ENCODE measurements at regions of chr5 and their contacts with region 1.

Region 1: DNA sequence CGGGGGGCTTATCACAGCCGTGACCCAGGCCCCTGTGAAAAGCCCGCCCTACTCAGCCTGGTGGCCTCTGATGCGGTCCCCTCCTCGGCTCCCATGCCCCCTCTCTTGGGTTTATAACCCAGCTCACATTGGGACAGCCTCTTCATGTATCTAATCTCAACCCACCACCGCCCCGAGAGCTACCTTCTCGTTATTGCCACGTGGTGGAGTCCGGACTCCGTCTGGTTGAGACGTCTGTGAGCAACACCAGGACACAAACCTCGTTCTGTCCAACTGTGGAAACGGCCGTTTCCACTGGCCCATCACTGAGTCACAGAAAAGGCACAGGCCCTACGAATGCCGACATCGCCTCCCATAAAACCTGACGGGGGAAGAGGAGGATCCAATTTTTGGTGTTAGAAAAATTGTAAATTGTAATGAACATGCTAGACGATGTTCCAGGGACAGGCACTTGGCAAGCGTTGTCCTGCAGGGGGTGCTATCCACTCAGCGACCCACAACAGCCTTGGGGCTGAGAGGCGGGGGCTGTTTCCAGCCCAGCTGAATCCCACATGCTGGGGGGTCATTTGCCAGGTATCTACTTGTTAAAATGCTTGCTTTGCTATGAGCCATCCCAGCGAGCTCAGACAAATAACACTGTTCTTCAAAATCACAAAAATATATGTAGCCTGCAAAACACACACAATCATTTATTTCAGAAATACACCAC is 37.3 kb upstream of the N4BP3 start:
- H3K4me3 ChIP-seq: peak overlapping the region; percentile 24
- H3K27ac ChIP-seq: no peak overlapping the region
- H3K4me1 ChIP-seq: no peaks in the 10 kb centered on the region
- CTCF ChIP-seq: peak; percentile 87

Region 2: GRCh38 chr5:178090858-178091540 is 15.0 kb after region 1 on chr5:
- CTCF ChIA-PET with region 1: interaction called, 31 read pairs
- POLR2A ChIA-PET with region 1: no interaction called
- H3K4me3 ChIP-seq: no peak overlapping the region
- H3K27ac ChIP-seq: no peak overlapping the region
- H3K4me1 ChIP-seq: no peaks in the 10 kb centered on the region
- CTCF ChIP-seq: no peak

Region 3: DNA sequence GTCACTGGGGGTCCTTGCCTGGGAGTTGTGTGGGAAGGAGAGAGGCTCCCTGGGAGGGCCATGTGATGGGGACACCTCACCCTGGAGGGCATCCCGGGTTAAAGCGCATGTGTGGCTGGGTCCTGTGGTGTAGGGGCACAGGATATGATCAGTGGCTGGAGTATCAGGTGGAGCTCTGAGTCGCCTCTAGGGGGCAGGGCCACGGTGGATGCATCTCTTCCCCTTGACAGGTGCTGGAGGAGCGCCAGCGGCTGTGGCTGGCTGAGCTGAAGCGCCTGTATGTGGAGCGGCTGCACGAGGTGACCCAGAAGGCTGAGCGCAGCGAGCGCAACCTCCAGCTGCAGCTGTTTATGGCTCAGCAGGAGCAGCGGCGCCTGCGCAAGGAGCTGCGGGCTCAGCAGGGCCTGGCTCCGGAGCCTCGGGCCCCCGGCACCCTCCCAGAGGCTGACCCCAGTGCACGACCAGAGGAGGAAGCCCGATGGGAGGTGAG is 44.9 kb after region 1 on chr5:
- CTCF ChIA-PET with region 1: interaction called, 19 read pairs
- POLR2A ChIA-PET with region 1: interaction called, 3 read pairs
- H3K4me3 ChIP-seq: no peak overlapping the region
- H3K27ac ChIP-seq: no peak overlapping the region; the same call in 1 of the 2 replicates
- H3K4me1 ChIP-seq: 0 out of 2 replicates have a peak, but pooled peaks cover 2% of the 10 kb centered on the region
- CTCF ChIP-seq: peak; percentile 96

Region 4: DNA sequence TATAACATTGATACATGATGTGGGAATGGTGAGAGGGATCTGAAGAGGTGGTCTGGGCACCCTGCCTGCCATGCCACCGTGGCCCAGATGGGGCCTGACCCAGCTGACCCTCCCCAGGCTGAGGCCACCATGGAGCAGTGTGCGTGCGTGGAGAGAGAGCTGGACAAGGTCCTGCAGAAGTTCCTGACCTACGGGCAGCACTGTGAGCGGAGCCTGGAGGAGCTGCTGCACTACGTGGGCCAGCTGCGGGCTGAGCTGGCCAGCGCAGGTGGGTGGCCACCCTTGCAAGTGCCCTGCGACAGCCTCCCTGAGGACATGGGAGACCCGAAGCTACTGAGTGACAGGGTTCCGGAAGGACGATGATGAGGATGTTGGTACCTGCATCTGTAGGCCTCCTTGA is 62.0 kb after region 1 on chr5:
- CTCF ChIA-PET with region 1: interaction called, 204 read pairs
- POLR2A ChIA-PET with region 1: interaction called, 3 read pairs
- H3K4me3 ChIP-seq: no peak overlapping the region
- H3K27ac ChIP-seq: no peak overlapping the region
- H3K4me1 ChIP-seq: no peaks in the 10 kb centered on the region
- CTCF ChIP-seq: no peak

Region 5: GRCh38 chr5:178163772-178164735 is 88.1 kb after region 1 on chr5:
- CTCF ChIA-PET with region 1: interaction called, 39 read pairs
- POLR2A ChIA-PET with region 1: no interaction called
- H3K4me3 ChIP-seq: peak overlapping the region; percentile 10; the same call in 1 of the 2 replicates
- H3K27ac ChIP-seq: no peak overlapping the region
- H3K4me1 ChIP-seq: no peaks in the 10 kb centered on the region
- CTCF ChIP-seq: peak; percentile 97

Region 6: GRCh38 chr5:178304761-178305645 is 229.0 kb after region 1 on chr5:
- CTCF ChIA-PET with region 1: no interaction called
- POLR2A ChIA-PET with region 1: no interaction called
- H3K4me3 ChIP-seq: no peak overlapping the region
- H3K27ac ChIP-seq: no peak overlapping the region
- H3K4me1 ChIP-seq: no peaks in the 10 kb centered on the region
- CTCF ChIP-seq: no peak

Measured in HEK293 (cell line).